ENCODE measurements at regions of chr9 and their contacts with region 1.

Region 1: DNA sequence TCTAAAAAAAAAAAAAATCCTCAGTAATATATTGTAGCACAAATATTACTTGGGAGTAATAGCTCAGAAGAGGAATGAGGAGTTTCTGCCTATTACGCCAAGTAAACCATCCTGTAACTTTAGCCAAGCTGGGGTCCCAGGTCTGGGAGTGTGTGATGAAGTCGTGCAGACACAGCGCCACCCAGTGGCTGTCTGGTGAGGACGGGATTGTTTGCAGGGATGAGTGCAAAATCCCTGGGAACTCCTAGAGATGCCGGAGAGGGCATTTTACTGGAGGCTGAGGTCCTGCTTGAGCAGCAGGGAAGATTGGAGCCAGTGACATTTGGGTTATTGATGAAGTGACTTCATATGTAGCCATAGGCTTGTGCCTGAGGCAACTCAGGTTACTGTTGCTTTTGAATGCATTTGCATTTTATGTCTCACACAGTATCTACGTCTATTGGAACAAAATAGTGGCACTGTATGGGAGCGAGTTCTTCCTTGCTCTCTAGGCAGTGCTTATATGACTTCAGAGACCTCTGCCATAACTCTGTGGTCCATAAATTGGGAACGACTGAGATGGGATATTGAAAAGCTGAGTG is 72.8 kb downstream of the PSAT1 start:
- DNase-seq: peak; percentile 81
- H3K4me3 Mint-ChIP-seq: no peak overlapping the region
- H3K27ac Mint-ChIP-seq: no peak overlapping the region
- H3K4me1 Mint-ChIP-seq: peaks cover 6% of the 10 kb centered on the region
- H3K27me3 Mint-ChIP-seq: peaks cover 11% of the 10 kb centered on the region
- CTCF ChIP-seq: peak; percentile 84

Region 2: DNA sequence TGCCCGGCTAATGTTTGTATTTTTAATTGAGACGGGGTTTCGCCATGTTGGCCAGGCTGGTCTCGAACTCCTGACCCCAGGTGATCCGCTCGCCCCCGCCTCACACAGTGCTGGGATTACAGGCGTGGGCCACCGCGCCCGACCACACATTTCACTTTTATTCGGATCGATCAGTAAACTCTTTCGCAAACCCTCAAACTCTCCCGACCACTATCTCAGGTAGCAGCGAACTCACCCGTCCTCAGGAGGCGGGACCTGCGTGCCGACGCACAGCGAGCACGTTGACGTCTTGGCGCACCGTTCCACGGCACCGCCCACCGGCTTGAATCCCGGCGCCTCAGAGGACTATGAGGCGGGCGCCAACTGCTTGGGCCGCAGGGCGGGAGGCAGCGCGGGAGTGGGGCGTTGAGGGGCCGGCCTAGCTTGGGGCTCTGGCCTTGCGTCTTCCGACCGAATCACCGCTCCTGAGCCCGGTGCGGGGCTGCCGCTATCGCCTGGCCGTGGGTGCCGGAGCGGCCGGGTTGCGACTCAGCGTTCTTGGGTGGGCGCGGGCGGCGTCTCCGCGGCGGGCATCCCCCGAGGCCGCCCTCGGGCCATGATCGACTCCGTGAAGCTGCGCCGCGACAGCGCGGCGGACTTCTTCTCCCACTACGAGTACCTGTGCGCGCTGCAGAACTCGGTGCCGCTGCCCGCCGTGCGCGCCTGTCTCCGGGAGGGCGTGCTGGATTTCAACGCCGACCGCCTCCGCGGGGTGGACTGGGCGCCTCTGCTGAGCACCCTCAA is 133.8 kb before region 1 on chr9 and contains the start of gene CEP78:
- CTCF ChIA-PET with region 1: interaction called, 95 read pairs
- POLR2A ChIA-PET with region 1: no interaction called
- intact Hi-C with region 1: loop called (anchors 1 kb)
- DNase-seq: peak; percentile 93
- H3K4me3 Mint-ChIP-seq: peak within 1 kb of the TSS; percentile 93
- H3K27ac Mint-ChIP-seq: peak within 1 kb of the TSS; percentile 96
- H3K4me1 Mint-ChIP-seq: peaks cover 16% of the 10 kb centered on the region
- H3K27me3 Mint-ChIP-seq: no peaks in the 10 kb centered on the region
- CTCF ChIP-seq: no peak
- total RNA-seq, gene CEP78: 13.7 and 17.8 TPM in 2 replicates

Region 3: GRCh38 chr9:78267889-78268288 is 101.8 kb before region 1 on chr9:
- CTCF ChIA-PET with region 1: interaction called, 60 read pairs
- POLR2A ChIA-PET with region 1: no interaction called
- intact Hi-C with region 1: no loop called
- DNase-seq: no peak
- H3K4me3 Mint-ChIP-seq: no peak overlapping the region
- H3K27ac Mint-ChIP-seq: peak overlapping the region; percentile 57
- H3K4me1 Mint-ChIP-seq: no peaks in the 10 kb centered on the region
- H3K27me3 Mint-ChIP-seq: no peaks in the 10 kb centered on the region
- CTCF ChIP-seq: no peak

Region 4: GRCh38 chr9:78296893-78297671 is 72.6 kb before region 1 on chr9 and contains the start of gene PSAT1:
- CTCF ChIA-PET with region 1: interaction called, 15 read pairs
- POLR2A ChIA-PET with region 1: interaction called, 3 read pairs
- intact Hi-C with region 1: no loop called
- DNase-seq: peak; percentile 98
- H3K4me3 Mint-ChIP-seq: peak within 1 kb of the TSS; percentile 92
- H3K27ac Mint-ChIP-seq: peak within 1 kb of the TSS; percentile 87
- H3K4me1 Mint-ChIP-seq: peaks cover 8% of the 10 kb centered on the region
- H3K27me3 Mint-ChIP-seq: no peaks in the 10 kb centered on the region
- CTCF ChIP-seq: no peak
- total RNA-seq, gene PSAT1: 263 and 326 TPM in 2 replicates

Region 5: GRCh38 chr9:78357165-78357873 is 12.4 kb before region 1 on chr9:
- CTCF ChIA-PET with region 1: interaction called, 25 read pairs
- POLR2A ChIA-PET with region 1: interaction called, 5 read pairs
- intact Hi-C with region 1: no loop called
- DNase-seq: no peak
- H3K4me3 Mint-ChIP-seq: no peak overlapping the region
- H3K27ac Mint-ChIP-seq: no peak overlapping the region
- H3K4me1 Mint-ChIP-seq: no peaks in the 10 kb centered on the region
- H3K27me3 Mint-ChIP-seq: no peaks in the 10 kb centered on the region
- CTCF ChIP-seq: no peak

Measured in MCF 10A (cell line).